ENCODE measurements at regions of chr9 and their contacts with region 1.

Region 1: GRCh38 chr9:92293452-92294296 is at the start of gene IARS1:
- DNase-seq: peak; percentile 100
- H3K4me3 Mint-ChIP-seq: peak within 1 kb of the TSS; percentile 98
- H3K27ac Mint-ChIP-seq: peak within 1 kb of the TSS; percentile 98
- H3K4me1 Mint-ChIP-seq: peaks cover 64% of the 10 kb centered on the region
- H3K27me3 Mint-ChIP-seq: no peaks in the 10 kb centered on the region
- total RNA-seq, gene IARS1: 208 and 217 TPM in 2 replicates

Region 2: GRCh38 chr9:92029553-92029952 is 264.1 kb before region 1 on chr9:
- intact Hi-C with region 1: no loop called
- DNase-seq: no peak
- H3K4me3 Mint-ChIP-seq: no peak overlapping the region
- H3K27ac Mint-ChIP-seq: no peak overlapping the region
- H3K4me1 Mint-ChIP-seq: no peaks in the 10 kb centered on the region
- H3K27me3 Mint-ChIP-seq: no peaks in the 10 kb centered on the region

Region 3: GRCh38 chr9:92115071-92115858 is 178.4 kb before region 1 on chr9 and contains the start of gene SPTLC1:
- intact Hi-C with region 1: loop called (anchors 1 kb)
- DNase-seq: peak; percentile 93
- H3K4me3 Mint-ChIP-seq: peak within 1 kb of the TSS; percentile 97
- H3K27ac Mint-ChIP-seq: peak within 1 kb of the TSS; percentile 95
- H3K4me1 Mint-ChIP-seq: peaks cover 47% of the 10 kb centered on the region
- H3K27me3 Mint-ChIP-seq: no peaks in the 10 kb centered on the region
- total RNA-seq, gene SPTLC1: 60.2 and 62.3 TPM in 2 replicates

Region 4: GRCh38 chr9:92234514-92234913 is 59.2 kb before region 1 on chr9:
- intact Hi-C with region 1: loop called (anchors 5 kb)
- DNase-seq: no peak
- H3K4me3 Mint-ChIP-seq: no peak overlapping the region
- H3K27ac Mint-ChIP-seq: no peak overlapping the region
- H3K4me1 Mint-ChIP-seq: no peaks in the 10 kb centered on the region
- H3K27me3 Mint-ChIP-seq: no peaks in the 10 kb centered on the region

Region 5: GRCh38 chr9:92276331-92277032 is 17.2 kb before region 1 on chr9:
- intact Hi-C with region 1: loop called (anchors 1 kb)
- DNase-seq: no peak
- H3K4me3 Mint-ChIP-seq: peak overlapping the region; percentile 61
- H3K27ac Mint-ChIP-seq: peak overlapping the region; percentile 75
- H3K4me1 Mint-ChIP-seq: peaks cover 36% of the 10 kb centered on the region
- H3K27me3 Mint-ChIP-seq: no peaks in the 10 kb centered on the region

Region 6: GRCh38 chr9:92308893-92309292 is 15.2 kb after region 1 on chr9:
- intact Hi-C with region 1: no loop called
- DNase-seq: no peak
- H3K4me3 Mint-ChIP-seq: no peak overlapping the region
- H3K27ac Mint-ChIP-seq: no peak overlapping the region
- H3K4me1 Mint-ChIP-seq: peaks cover 23% of the 10 kb centered on the region
- H3K27me3 Mint-ChIP-seq: no peaks in the 10 kb centered on the region

Region 7: GRCh38 chr9:92634712-92635605 is 341.3 kb after region 1 on chr9:
- intact Hi-C with region 1: loop called (anchors 1 kb)
- DNase-seq: peak; percentile 43
- H3K4me3 Mint-ChIP-seq: no peak overlapping the region
- H3K27ac Mint-ChIP-seq: peak overlapping the region; percentile 71
- H3K4me1 Mint-ChIP-seq: peaks cover 24% of the 10 kb centered on the region
- H3K27me3 Mint-ChIP-seq: no peaks in the 10 kb centered on the region

Region 8: GRCh38 chr9:94108584-94108983 is 1814.9 kb after region 1 on chr9:
- intact Hi-C with region 1: no loop called
- DNase-seq: no peak
- H3K4me3 Mint-ChIP-seq: no peak overlapping the region
- H3K27ac Mint-ChIP-seq: no peak overlapping the region
- H3K4me1 Mint-ChIP-seq: peaks cover 4% of the 10 kb centered on the region
- H3K27me3 Mint-ChIP-seq: no peaks in the 10 kb centered on the region

Measured in activated T-helper 1 cell treated with anti-CD3 and anti-CD28 coated beads, Interleukin-12 subunit alpha, Interleukin-12 subunit beta, Interleukin-2, Interleukin-4 antibody, amounts not matched to agents 30 ng/mL and 10 ng/mL and 1 ng/mL, durations not matched to agents 14 hours and 24 hours and 36 hours (primary cell).